Heart left ventricle (tissue), 16 donors: ENCODE measurements at regions of chr1 and their contacts with region 1.

Region 1: DNA sequence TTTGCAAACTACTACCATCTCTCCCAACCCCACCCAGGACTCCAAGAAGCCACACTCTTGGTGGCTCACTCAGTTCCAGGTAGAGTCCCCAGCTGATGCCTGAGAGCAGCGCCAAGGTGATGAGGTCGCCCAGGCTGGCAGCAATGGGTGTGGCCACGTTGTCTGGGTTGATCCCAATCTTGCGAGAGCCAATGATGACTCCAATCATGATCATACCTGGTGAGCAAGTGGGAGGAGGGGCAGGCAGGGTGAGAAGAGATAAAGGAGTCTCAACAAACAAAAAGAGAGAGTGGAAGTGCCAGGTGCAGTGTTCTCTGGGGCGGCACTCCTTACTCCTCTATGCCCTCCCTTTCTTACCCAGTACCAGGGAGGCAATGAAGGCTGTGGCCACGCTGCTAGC is 14.4 kb downstream of the SLC41A1 start:
- DNase-seq: no peak
- ATAC-seq: no peak
- H3K4me3 ChIP-seq: no peak overlapping the region
- H3K27ac ChIP-seq: peak overlapping the region in 2 of 12 donors; percentile 60 to 64
- H3K4me1 ChIP-seq: peaks cover 0 to 56% (median 21%) of the 10 kb centered on the region in 12 donors
- H3K27me3 ChIP-seq: no peaks in the 10 kb centered on the region
- CTCF ChIP-seq: no peak
- POLR2A ChIP-seq: no peak

Region 2: GRCh38 chr1:205693421-205693991 is 105.1 kb before region 1 on chr1:
- intact Hi-C with region 1: no loop called
- DNase-seq: no peak
- ATAC-seq: no peak
- H3K4me3 ChIP-seq: no peak overlapping the region
- H3K27ac ChIP-seq: no peak overlapping the region
- H3K4me1 ChIP-seq: no peaks in the 10 kb centered on the region
- H3K27me3 ChIP-seq: no peaks in the 10 kb centered on the region
- CTCF ChIP-seq: no peak
- POLR2A ChIP-seq: no peak

Region 3: DNA sequence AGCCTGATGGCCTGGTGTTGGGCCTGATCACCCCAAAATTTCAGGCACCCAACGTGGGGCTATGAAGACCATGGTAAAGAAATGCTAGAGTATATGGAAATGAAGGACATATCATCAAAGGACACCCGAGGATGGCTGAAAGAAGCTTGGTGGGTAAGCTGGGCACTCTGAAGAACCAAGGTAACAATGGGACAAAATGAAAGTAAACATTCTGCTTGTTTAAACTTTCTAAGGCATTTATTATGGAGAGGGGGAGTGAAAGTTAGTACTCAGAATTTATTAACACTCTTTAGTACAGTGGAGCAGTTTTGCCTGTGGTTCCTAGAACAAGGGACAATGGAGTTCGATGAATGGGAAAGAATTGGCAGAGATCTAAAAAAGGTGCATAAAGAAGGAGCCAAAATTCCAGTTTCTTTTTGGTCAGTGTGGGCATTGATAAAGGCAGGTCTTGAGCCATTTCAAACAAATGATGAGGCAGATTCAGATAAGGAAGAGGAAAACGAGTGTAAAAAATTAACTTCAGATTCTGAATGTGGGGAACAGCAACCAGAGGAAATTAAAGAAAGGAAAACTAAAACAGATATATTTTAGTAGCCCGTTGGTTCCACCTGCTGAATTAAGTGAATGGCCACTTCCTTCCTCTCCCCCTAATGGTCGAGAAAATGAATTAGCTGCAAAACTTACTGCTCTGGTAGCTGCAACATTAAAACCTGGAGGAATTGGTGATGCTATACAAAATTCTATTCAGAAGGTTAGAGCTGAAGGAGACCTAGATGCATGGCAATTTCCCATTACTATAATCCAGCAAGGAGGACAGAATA is 59.8 kb after region 1 on chr1:
- intact Hi-C with region 1: loop called in 1 of 10 experiments (anchors 5 kb)
- DNase-seq: no peak
- ATAC-seq: no peak
- H3K4me3 ChIP-seq: no peak overlapping the region
- H3K27ac ChIP-seq: no peak overlapping the region
- H3K4me1 ChIP-seq: no peaks in the 10 kb centered on the region
- H3K27me3 ChIP-seq: peaks cover 0 to 4% (median 0%) of the 10 kb centered on the region in 9 donors
- CTCF ChIP-seq: peak in 3 of 12 donors; percentile 12 to 25 (median 23)
- POLR2A ChIP-seq: no peak

Region 4: GRCh38 chr1:205870236-205870635 is 71.6 kb after region 1 on chr1:
- intact Hi-C with region 1: no loop called
- DNase-seq: no peak
- ATAC-seq: no peak
- H3K4me3 ChIP-seq: no peak overlapping the region
- H3K27ac ChIP-seq: no peak overlapping the region
- H3K4me1 ChIP-seq: no peaks in the 10 kb centered on the region
- H3K27me3 ChIP-seq: no peaks in the 10 kb centered on the region
- CTCF ChIP-seq: no peak
- POLR2A ChIP-seq: no peak